ENCODE measurements at regions of chr18 and their contacts with region 1.

Region 1: DNA sequence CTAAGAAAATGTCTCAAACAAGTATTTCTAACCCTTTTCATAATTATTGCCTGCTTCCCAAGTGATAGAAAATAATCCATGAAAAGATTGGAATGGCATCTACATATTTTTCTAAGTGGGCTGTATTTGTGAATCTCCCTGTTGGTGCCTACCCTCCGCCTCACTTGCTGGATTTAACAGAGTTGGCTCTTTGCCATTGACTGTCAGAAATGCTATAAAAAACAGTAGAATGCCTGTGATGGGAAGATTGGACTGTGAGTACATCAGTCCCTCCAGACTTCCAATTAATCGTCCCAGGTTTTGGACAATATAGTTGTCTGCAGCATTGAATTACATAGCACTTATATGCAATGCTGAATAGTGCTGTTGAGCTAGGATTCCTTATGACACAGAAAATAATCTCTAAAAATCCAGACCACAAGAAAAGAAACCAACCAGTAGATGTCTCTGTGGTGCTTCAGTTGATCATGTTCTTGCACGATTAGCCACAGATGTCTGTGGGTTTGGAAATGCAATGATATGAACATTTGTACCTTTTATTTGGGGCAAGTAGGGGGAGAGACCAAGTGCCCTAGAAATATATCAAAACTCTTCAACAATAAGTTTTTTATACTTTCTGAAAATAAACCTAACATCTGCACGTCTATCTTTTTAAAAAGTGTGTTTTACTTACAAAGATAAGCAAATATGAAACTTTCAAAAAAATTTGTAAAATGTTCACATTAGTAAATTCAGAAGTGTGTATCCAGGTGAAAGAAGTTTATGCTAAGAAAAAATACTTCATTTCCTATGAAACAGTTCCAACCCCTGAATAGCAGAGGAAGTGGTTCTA is 88.5 kb downstream of the DYNAP start:
- DNase-seq: no peak
- H3K4me3 Mint-ChIP-seq: no peak overlapping the region
- H3K27ac Mint-ChIP-seq: no peak overlapping the region
- H3K4me1 Mint-ChIP-seq: peaks cover 11% of the 10 kb centered on the region
- H3K27me3 Mint-ChIP-seq: peaks cover 2% of the 10 kb centered on the region

Region 2: DNA sequence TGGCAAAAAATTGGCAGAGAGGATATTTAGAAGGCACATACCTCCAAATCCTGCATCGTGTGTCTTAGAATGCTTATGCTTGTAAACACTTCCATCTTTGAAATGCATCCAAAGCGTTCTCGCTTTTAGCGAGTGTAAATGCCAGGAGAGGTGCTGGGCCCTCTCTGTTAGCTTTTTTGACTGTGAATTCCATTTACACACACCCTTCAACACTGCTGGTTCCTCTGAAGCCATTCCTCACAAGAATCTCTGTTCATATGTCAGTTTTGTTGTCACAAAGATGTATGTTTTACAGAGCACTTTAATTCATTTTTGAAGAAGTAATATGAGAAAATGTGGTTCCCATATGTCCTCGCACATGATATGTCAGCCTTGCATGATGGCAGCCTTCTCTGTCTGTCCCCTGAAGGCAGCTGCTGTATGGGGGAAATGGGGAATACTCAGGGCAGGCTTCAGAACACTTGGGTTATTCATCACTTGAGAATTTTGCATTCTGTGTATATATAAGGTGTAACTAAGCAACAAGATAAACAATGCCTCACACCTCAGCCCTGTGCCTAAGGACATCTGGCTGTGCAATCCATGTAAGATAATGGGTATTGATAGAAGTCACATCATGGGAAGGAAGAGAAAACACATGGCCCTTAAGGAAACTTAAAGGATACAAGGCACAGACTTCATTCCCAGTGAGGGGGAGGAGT is 201.0 kb after region 1 on chr18:
- CTCF ChIA-PET with region 1: no interaction called
- POLR2A ChIA-PET with region 1: no interaction called
- DNase-seq: no peak
- H3K4me3 Mint-ChIP-seq: no peak overlapping the region
- H3K27ac Mint-ChIP-seq: no peak overlapping the region
- H3K4me1 Mint-ChIP-seq: no peaks in the 10 kb centered on the region
- H3K27me3 Mint-ChIP-seq: no peaks in the 10 kb centered on the region

Region 3: DNA sequence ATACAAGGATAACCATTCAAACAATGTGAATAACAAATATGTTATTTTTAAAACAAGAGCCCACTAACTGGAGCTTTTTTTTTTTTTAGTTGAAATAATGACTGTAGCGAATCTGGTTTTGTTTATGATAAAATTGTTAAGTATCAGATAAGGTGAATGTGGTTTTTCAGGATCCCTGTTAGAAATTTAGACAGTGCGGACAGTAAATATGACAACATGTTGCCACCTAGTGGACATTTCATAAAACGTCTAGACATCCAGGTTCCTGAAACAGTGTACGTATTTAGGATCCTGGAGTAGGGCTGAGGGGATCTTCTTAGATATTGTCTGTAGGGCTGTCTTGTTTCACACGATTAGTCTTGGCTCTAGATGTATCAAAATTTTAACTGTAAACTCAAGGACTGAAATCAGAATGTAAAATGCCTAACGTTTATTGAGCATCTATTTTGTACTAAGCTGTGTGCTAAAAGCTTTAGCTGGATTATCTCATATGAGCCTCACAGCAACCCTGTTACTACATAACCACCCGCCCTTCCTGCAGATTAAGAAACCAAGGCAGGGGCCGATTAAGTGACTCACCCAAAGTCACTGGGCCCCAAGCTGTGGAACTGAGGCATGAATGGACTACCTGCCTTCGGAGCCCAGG is 303.6 kb after region 1 on chr18:
- CTCF ChIA-PET with region 1: interaction called, 18 read pairs
- POLR2A ChIA-PET with region 1: interaction called, 3 read pairs
- DNase-seq: no peak
- H3K4me3 Mint-ChIP-seq: no peak overlapping the region
- H3K27ac Mint-ChIP-seq: no peak overlapping the region
- H3K4me1 Mint-ChIP-seq: no peaks in the 10 kb centered on the region
- H3K27me3 Mint-ChIP-seq: peaks cover 3% of the 10 kb centered on the region